ENCODE measurements at regions of chrX and their contacts with region 1.

Region 1: DNA sequence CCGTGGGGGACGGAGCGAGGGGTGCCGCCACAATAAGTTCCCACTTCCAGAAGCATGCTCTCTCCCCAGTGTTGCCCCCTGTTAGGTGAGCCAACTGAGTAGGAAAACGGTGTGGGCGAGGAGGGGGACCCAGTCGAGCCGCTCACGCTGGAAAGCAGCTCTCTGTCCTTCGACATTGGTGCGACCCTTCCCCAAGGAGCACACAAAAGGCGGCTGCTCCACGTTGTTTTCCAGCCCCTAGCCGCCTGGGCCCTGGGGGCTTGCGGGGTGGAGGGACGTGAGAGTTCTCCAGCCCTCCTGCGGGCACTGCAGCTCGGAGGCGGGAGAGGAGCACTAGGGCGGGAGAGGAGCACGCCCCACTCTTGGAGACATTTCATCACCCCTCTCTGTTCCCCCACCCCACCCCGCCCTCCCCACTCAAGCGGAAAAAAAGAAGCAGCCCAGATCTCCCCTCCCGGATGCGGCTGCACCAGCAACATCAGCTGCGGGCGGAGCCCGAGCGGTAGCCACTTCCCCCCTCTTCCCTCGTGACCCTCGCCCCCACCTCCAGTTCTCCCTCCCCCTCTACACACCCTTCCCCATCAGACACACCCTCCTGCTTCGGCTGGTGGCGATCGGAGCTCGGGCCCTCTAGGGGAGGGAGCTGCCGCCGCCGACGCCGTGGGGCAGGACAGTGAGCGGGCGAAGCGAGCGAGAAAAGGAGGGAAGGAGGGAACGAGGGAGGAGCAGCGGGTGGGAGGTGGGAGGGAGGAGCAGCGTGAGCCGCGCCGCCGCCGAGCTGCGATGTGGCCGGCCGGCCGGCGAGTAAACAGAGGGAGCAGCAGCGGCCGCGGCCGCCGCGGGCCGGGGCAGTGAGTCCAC is at the start of gene DOCK11:
- DNase-seq: peak; percentile 50 to 85
- H3K4me3 ChIP-seq: peak within 1 kb of the TSS; percentile 49 to 93
- H3K27ac ChIP-seq: peak within 1 kb of the TSS; percentile 80 to 94
- H3K4me1 ChIP-seq: peaks cover 0 to 3% of the 10 kb centered on the region in 2 donors
- H3K27me3 ChIP-seq: no peaks in the 10 kb centered on the region
- CTCF ChIP-seq: no peak
- total RNA-seq, gene DOCK11: 23.0 TPM

Region 2: GRCh38 chrX:118459494-118459893 is 35.8 kb before region 1 on chrX:
- intact Hi-C with region 1: loop called (anchors 5 kb)
- DNase-seq: no peak
- H3K4me3 ChIP-seq: no peak overlapping the region
- H3K27ac ChIP-seq: no peak overlapping the region
- H3K4me1 ChIP-seq: no peaks in the 10 kb centered on the region
- H3K27me3 ChIP-seq: no peaks in the 10 kb centered on the region
- CTCF ChIP-seq: peak; percentile 36 to 57 (median 51)

Region 3: DNA sequence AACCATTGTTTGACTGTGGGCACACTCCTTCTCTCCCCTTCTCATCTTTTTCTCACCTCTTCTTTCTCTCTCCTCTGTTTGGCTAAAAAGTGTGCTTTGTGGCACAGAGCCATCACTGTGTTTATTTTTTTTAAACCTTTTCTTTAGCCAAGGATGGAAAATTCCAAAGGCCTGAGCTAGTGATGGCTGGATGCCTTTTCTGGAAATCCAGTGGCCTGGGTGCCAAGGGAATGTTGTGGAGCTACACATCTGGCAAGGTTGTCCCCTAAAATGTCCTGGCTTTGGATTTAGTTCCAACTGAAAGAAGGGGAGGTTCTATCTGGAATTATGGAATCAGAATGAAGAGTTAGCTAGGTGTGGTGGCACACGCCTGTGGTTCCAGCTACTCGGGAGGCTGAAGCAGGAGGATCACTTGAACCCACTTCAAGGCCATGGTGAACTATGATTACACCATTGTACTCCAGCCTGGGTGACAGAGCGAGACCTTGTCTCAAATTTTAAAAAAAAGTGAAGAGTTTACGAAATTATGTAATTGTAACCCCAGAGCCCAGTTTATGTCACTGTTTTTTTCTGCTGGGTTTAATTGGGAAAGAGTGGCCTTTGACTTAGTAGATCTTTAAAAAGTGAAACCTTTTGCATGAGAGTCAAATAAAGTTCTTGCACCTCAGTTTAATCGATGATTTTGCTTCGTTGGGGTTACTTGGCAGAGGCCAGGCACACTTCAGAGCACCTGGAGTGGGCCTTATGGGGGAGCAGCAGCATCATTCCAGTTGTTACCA is 18.0 kb after region 1 on chrX:
- intact Hi-C with region 1: loop called (anchors 2 kb)
- DNase-seq: peak in 1 of 2 donors; percentile 70
- H3K4me3 ChIP-seq: no peak overlapping the region
- H3K27ac ChIP-seq: peak overlapping the region; percentile 38 to 41
- H3K4me1 ChIP-seq: peaks cover 0 to 12% of the 10 kb centered on the region in 2 donors
- H3K27me3 ChIP-seq: no peaks in the 10 kb centered on the region
- CTCF ChIP-seq: no peak

Region 4: DNA sequence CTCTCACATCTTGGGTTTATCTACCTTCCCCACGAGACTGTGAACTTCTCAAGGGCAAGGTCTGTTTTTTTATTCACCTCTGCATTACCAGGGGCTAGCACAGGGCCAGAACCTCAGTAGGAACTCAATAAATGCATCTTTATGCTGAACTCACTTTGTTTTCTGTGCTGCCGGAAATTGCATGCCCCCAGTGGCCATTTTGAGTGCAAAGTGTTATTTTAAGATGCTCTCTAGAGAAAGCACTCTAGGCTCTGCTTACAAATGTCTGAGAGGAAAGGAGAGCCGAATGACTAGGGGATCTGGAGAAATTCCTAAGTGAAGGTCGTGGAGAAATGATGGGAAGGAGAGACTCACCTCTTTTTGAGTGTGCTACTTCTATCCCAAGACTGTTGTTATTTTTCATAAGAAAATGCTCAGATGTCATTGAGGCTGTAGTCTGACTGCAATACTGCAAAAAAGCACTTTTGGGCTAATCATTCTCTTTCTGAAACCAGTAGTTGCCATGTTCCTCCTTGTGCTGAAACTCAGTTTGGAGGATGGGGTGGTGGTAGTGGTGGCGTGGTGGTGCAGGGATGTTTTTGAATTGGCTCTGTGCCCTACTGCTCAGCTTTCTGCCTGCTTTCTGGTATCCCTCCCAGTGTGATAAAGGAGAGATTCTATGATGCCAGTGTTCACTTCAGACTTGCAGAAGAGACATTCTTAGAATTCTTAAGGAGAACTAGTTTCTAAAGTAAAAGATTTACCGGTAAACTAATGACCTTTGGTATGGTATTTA is 41.6 kb after region 1 on chrX:
- intact Hi-C with region 1: loop called (anchors 5 kb)
- DNase-seq: no peak
- H3K4me3 ChIP-seq: no peak overlapping the region
- H3K27ac ChIP-seq: peak overlapping the region in 1 of 2 donors; percentile 46
- H3K4me1 ChIP-seq: peaks cover 0 to 3% of the 10 kb centered on the region in 2 donors
- H3K27me3 ChIP-seq: no peaks in the 10 kb centered on the region
- CTCF ChIP-seq: peak in 2 of 3 experiments; percentile 24 to 25

Region 5: GRCh38 chrX:118562582-118563164 is 67.4 kb after region 1 on chrX:
- intact Hi-C with region 1: no loop called
- DNase-seq: no peak
- H3K4me3 ChIP-seq: no peak overlapping the region
- H3K27ac ChIP-seq: no peak overlapping the region
- H3K4me1 ChIP-seq: no peaks in the 10 kb centered on the region
- H3K27me3 ChIP-seq: no peaks in the 10 kb centered on the region
- CTCF ChIP-seq: no peak

Region 6: GRCh38 chrX:118726887-118727739 is 231.8 kb after region 1 on chrX and contains the start of gene IL13RA1:
- intact Hi-C with region 1: loop called (anchors 10 kb)
- DNase-seq: peak; percentile 40 to 90
- H3K4me3 ChIP-seq: peak within 1 kb of the TSS; percentile 65 to 76
- H3K27ac ChIP-seq: peak within 1 kb of the TSS; percentile 91 to 92
- H3K4me1 ChIP-seq: peaks cover 0 to 3% of the 10 kb centered on the region in 2 donors
- H3K27me3 ChIP-seq: no peaks in the 10 kb centered on the region
- CTCF ChIP-seq: no peak
- total RNA-seq, gene IL13RA1: 29.6 TPM